AG04449 (cell line): ENCODE measurements at regions of chr22 and their contacts with region 1.

Region 1: DNA sequence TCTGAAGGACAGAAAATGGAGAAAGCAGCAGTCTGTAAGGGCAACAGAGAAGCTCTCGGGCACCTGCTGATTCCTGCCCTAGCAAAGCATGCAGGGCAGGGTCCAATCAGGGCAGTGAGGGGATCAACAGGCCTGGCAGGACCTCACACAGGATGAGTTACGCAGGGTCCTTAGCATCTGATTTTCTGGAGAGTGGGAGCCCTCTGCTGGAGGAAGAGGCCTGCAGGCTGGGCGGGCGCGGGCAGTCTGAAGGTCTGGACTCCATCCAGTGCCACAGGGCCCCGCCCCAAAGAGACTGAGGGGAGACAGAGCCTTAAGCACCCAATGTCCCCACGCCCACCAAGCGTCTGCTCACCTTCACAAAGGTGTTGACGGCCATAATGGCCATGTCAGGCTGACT is 28.9 kb downstream of the AP1B1 start:
- DNase-seq: no peak
- H3K4me3 ChIP-seq: no peak overlapping the region
- CTCF ChIP-seq: peak; percentile 81

Region 2: GRCh38 chr22:29300807-29301601 is 58.5 kb before region 1 on chr22:
- CTCF ChIA-PET with region 1: interaction called, 48 read pairs
- POLR2A ChIA-PET with region 1: no interaction called
- DNase-seq: no peak
- H3K4me3 ChIP-seq: no peak overlapping the region
- CTCF ChIP-seq: no peak

Region 3: DNA sequence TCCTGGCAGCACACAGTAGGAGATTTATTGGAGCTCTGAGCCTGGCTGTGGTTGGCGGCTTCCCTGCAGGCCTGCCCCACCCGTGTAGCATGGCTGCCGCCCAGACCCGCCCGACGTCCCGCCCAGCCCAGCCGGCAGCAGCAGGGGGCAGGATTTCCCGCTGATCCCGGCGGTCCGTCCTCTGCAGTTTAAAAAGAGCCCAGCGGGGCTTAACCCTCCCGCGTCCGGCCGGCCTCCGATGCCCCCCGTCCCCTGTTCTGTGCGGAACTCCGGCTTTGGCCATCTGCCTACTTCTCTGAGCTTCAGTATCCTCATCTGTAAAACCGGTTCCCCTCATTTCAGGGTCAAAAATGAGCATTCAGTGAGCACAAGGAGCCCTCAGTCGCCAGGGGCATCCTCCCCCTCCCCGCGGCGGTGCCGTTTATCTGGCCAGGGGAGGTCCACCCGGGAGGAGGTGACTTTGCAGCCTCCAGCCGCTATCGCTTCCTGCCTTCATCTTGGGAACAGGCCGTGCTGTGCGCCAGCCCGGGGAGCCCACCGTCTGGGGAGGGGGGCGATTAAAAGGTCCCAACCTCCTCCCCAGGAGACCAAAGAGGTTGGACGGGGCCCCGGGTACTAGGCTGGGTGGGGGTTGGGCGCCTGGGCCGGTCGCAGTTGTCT is 53.2 kb before region 1 on chr22 and contains the start of gene GAS2L1:
- CTCF ChIA-PET with region 1: interaction called, 48 read pairs
- POLR2A ChIA-PET with region 1: no interaction called
- DNase-seq: no peak
- H3K4me3 ChIP-seq: peak within 1 kb of the TSS; percentile 62
- CTCF ChIP-seq: peak; percentile 89

Region 4: GRCh38 chr22:29313121-29313580 is 46.3 kb before region 1 on chr22:
- CTCF ChIA-PET with region 1: interaction called, 48 read pairs
- POLR2A ChIA-PET with region 1: no interaction called
- DNase-seq: no peak
- H3K4me3 ChIP-seq: no peak overlapping the region
- CTCF ChIP-seq: peak; percentile 61

Region 5: DNA sequence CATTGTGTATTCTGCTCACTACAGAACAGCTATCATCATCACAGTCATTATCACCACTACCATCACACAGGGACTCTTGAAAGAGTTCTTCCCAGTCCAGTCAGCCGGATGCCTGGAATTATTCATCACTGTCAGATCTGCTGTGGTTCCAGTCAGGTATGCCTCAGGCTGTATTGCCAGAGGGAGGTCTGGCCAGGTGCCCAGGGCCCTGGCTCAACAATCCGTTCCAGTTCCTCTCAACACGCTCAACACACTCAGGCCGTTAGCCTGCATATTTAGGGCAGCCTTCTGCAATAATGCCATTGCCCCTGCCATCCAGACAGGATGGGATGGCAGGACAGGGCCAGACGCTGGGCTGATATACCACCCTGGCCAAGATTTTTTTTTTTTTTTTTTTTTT is 15.3 kb before region 1 on chr22:
- CTCF ChIA-PET with region 1: interaction called, 11 read pairs
- POLR2A ChIA-PET with region 1: interaction called, 3 read pairs
- DNase-seq: peak; percentile 79
- H3K4me3 ChIP-seq: no peak overlapping the region
- CTCF ChIP-seq: no peak

Region 6: GRCh38 chr22:29456211-29456671 is 96.8 kb after region 1 on chr22:
- CTCF ChIA-PET with region 1: no interaction called
- POLR2A ChIA-PET with region 1: no interaction called
- DNase-seq: peak; percentile 36
- H3K4me3 ChIP-seq: no peak overlapping the region
- CTCF ChIP-seq: no peak